ENCODE measurements at regions of chr6 and their contacts with region 1.

Region 1: DNA sequence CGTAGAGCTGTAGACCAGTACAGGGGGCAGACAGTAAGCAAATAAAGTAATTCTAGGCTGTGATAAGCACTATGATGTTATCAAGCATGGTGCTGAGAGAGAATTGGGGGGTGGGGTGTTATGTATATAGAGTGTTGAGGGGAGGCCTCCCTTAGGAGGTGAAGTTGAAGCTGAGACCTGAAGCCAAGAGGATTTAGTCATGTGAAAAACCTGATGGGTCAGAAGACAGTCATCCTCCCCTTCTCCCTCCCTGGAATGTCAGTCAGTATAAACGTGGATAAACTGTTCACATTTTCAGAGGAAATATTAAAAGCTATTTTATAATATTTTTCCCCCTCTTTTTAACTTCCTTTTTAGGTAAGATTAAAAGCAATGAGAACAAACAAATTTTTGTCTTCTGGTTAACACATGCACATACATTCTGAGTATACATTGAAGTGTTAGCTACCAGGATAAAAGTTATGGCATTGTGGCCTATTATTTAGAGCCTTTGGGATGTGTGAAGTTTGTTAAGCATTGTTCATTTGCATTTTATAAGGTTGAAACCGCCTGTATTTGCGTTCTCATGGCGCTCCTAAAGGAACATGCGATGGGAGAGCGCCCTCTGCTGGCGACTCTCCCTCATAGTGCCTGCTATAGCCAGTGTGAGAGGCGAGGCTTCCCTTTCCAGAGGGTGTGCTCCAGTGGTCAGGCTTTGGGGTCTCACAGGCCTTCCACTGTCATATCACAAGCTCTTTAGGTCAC is 35.4 kb upstream of the MAPK13 start:
- DNase-seq: peak; percentile 33
- ATAC-seq: peak; percentile 100
- H3K4me3 ChIP-seq: no peak overlapping the region
- H3K27ac ChIP-seq: peak overlapping the region; percentile 28; the same call in 1 of the 2 replicates
- H3K4me1 ChIP-seq: peaks cover 7% of the 10 kb centered on the region; the same call in 1 of the 2 replicates
- H3K27me3 ChIP-seq: no peaks in the 10 kb centered on the region
- CTCF ChIP-seq: peak; percentile 86 to 95 (median 93); a peak in 5 of 6 replicates
- EP300 ChIP-seq: no peak
- POLR2A ChIP-seq: no peak
- RAD21 ChIP-seq: peak; percentile 95

Region 2: GRCh38 chr6:35771343-35771627 is 323.6 kb before region 1 on chr6:
- CTCF ChIA-PET with region 1: no interaction called
- POLR2A ChIA-PET with region 1: no interaction called
- RAD21 ChIA-PET with region 1: no interaction called
- SMC1A ChIA-PET with region 1: no interaction called
- in situ Hi-C with region 1: no loop called
- intact Hi-C with region 1: no loop called
- DNase-seq: no peak
- ATAC-seq: peak; percentile 17; the same call in 2 of the 3 replicates
- H3K4me3 ChIP-seq: no peak overlapping the region
- H3K27ac ChIP-seq: no peak overlapping the region
- H3K4me1 ChIP-seq: peaks cover 11% of the 10 kb centered on the region
- H3K27me3 ChIP-seq: no peaks in the 10 kb centered on the region
- CTCF ChIP-seq: no peak
- EP300 ChIP-seq: no peak
- POLR2A ChIP-seq: no peak
- RAD21 ChIP-seq: no peak

Region 3: DNA sequence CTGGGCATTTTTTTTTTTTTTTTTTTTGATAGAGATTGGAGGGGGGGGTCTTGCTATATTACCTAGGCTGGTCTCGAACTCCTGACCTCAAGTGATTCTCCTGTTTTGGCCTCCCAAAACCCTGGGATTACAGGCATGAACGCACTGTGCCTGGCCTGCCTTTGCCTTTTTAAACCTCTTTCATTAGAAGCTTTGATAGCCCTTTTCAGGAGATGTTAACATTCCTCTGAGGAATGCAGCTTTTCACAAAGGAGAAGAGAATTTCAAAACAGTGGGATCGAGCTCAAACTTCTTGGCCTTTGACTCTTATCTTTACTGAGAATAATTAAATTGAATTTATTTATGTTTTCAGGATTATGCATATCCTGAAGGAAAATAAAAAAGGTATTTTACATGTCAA is 101.8 kb before region 1 on chr6:
- CTCF ChIA-PET with region 1: interaction called, 12 read pairs
- POLR2A ChIA-PET with region 1: no interaction called
- RAD21 ChIA-PET with region 1: no interaction called
- SMC1A ChIA-PET with region 1: interaction called, 3 read pairs
- in situ Hi-C with region 1: no loop called
- intact Hi-C with region 1: no loop called
- DNase-seq: no peak
- ATAC-seq: no peak
- H3K4me3 ChIP-seq: no peak overlapping the region
- H3K27ac ChIP-seq: no peak overlapping the region
- H3K4me1 ChIP-seq: no peaks in the 10 kb centered on the region
- H3K27me3 ChIP-seq: no peaks in the 10 kb centered on the region
- CTCF ChIP-seq: no peak
- EP300 ChIP-seq: no peak
- POLR2A ChIP-seq: no peak
- RAD21 ChIP-seq: no peak

Region 4: DNA sequence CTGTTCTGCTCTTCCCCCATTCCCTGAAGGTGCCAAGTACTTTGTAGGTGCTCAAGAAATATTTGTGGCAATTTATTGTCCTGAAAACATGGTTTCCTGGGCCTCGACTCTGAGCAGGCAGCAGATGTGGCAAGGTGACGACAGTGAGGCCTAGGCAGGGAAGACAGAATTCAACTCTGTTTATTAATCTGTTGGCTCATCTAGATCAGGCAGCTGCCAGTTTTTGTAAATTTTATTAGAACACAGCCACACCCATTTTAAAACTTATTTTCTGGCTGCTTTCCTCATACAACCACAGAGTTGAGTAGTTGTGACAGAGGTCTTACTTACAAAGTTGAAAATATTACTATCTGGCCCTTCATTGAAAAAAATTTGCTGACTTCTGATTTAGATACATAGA is 42.8 kb before region 1 on chr6:
- CTCF ChIA-PET with region 1: interaction called, 13 read pairs
- POLR2A ChIA-PET with region 1: no interaction called
- RAD21 ChIA-PET with region 1: interaction called, 4 read pairs
- SMC1A ChIA-PET with region 1: interaction called, 8 read pairs
- in situ Hi-C with region 1: no loop called
- intact Hi-C with region 1: no loop called
- DNase-seq: no peak
- ATAC-seq: no peak
- H3K4me3 ChIP-seq: no peak overlapping the region
- H3K27ac ChIP-seq: no peak overlapping the region
- H3K4me1 ChIP-seq: peaks cover 3% of the 10 kb centered on the region; the same call in 1 of the 2 replicates
- H3K27me3 ChIP-seq: no peaks in the 10 kb centered on the region
- CTCF ChIP-seq: no peak
- EP300 ChIP-seq: no peak
- POLR2A ChIP-seq: no peak
- RAD21 ChIP-seq: no peak

Region 5: DNA sequence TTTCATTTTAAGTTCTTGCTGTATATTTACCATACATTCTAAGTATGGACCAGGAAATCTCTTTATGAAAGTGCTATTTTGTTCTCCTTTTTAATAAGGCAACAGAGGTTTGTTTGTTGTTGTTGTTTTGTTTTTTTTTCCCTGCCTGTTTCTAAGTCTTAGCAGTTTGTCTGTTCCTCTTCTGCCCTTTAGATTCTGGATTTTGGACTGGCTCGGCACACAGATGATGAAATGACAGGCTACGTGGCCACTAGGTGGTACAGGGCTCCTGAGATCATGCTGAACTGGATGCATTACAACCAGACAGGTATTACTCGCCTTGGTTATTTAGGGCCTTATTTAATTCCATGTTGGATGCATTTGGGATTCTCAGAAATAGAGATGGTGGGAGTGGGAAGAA is 19.3 kb before region 1 on chr6:
- CTCF ChIA-PET with region 1: interaction called, 33 read pairs
- POLR2A ChIA-PET with region 1: interaction called, 3 read pairs
- RAD21 ChIA-PET with region 1: interaction called, 7 read pairs
- SMC1A ChIA-PET with region 1: interaction called, 18 read pairs
- in situ Hi-C with region 1: no loop called
- intact Hi-C with region 1: no loop called
- DNase-seq: no peak
- ATAC-seq: 0 out of 3 replicates have a peak, but pooled peaks have one; percentile 24
- H3K4me3 ChIP-seq: no peak overlapping the region
- H3K27ac ChIP-seq: no peak overlapping the region
- H3K4me1 ChIP-seq: no peaks in the 10 kb centered on the region
- H3K27me3 ChIP-seq: no peaks in the 10 kb centered on the region
- CTCF ChIP-seq: peak; percentile 8 to 30 (median 29); a peak in 2 of 6 replicates
- EP300 ChIP-seq: no peak
- POLR2A ChIP-seq: no peak
- RAD21 ChIP-seq: 0 out of 2 replicates have a peak, but pooled peaks have one; percentile 13

Region 6: GRCh38 chr6:36114798-36115408 is 20.0 kb after region 1 on chr6:
- CTCF ChIA-PET with region 1: interaction called, 38 read pairs
- POLR2A ChIA-PET with region 1: interaction called, 5 read pairs
- RAD21 ChIA-PET with region 1: interaction called, 4 read pairs
- SMC1A ChIA-PET with region 1: interaction called, 23 read pairs
- in situ Hi-C with region 1: no loop called
- intact Hi-C with region 1: no loop called
- DNase-seq: peak; percentile 60
- ATAC-seq: peak; percentile 76
- H3K4me3 ChIP-seq: peak overlapping the region; percentile 18; the same call in 1 of the 2 replicates
- H3K27ac ChIP-seq: peak overlapping the region; percentile 63
- H3K4me1 ChIP-seq: peaks cover 43% of the 10 kb centered on the region
- H3K27me3 ChIP-seq: no peaks in the 10 kb centered on the region
- CTCF ChIP-seq: no peak
- EP300 ChIP-seq: peak; percentile 62 to 77; a peak in 3 of 4 replicates
- POLR2A ChIP-seq: no peak
- RAD21 ChIP-seq: no peak

Region 7: GRCh38 chr6:36196880-36197548 is 102.1 kb after region 1 on chr6:
- CTCF ChIA-PET with region 1: interaction called, 16 read pairs
- POLR2A ChIA-PET with region 1: no interaction called
- RAD21 ChIA-PET with region 1: interaction called, 8 read pairs
- SMC1A ChIA-PET with region 1: interaction called, 13 read pairs
- in situ Hi-C with region 1: no loop called
- intact Hi-C with region 1: no loop called
- DNase-seq: peak; percentile 88
- ATAC-seq: peak; percentile 97
- H3K4me3 ChIP-seq: peak overlapping the region; percentile 79
- H3K27ac ChIP-seq: peak overlapping the region; percentile 64
- H3K4me1 ChIP-seq: peaks cover 5% of the 10 kb centered on the region; the same call in 1 of the 2 replicates
- H3K27me3 ChIP-seq: no peaks in the 10 kb centered on the region
- CTCF ChIP-seq: no peak
- EP300 ChIP-seq: no peak
- POLR2A ChIP-seq: peak; percentile 79
- RAD21 ChIP-seq: no peak

Region 8: GRCh38 chr6:36386495-36387439 is 291.8 kb after region 1 on chr6:
- CTCF ChIA-PET with region 1: no interaction called
- POLR2A ChIA-PET with region 1: no interaction called
- RAD21 ChIA-PET with region 1: no interaction called
- SMC1A ChIA-PET with region 1: no interaction called
- in situ Hi-C with region 1: no loop called
- intact Hi-C with region 1: no loop called
- DNase-seq: no peak
- ATAC-seq: peak; percentile 49
- H3K4me3 ChIP-seq: peak overlapping the region; percentile 68
- H3K27ac ChIP-seq: peak overlapping the region; percentile 6
- H3K4me1 ChIP-seq: peaks cover 40% of the 10 kb centered on the region
- H3K27me3 ChIP-seq: peaks cover 3 to 4% of the 10 kb centered on the region in 2 experiments; a peak in 2 of 4 replicates
- CTCF ChIP-seq: no peak
- EP300 ChIP-seq: no peak
- POLR2A ChIP-seq: no peak
- RAD21 ChIP-seq: no peak

Region 9: GRCh38 chr6:36839749-36840431 is 745.0 kb after region 1 on chr6:
- CTCF ChIA-PET with region 1: no interaction called
- POLR2A ChIA-PET with region 1: no interaction called
- RAD21 ChIA-PET with region 1: no interaction called
- SMC1A ChIA-PET with region 1: no interaction called
- in situ Hi-C with region 1: no loop called
- intact Hi-C with region 1: no loop called
- DNase-seq: no peak
- ATAC-seq: peak; percentile 69
- H3K4me3 ChIP-seq: no peak overlapping the region; the same call in 1 of the 2 replicates
- H3K27ac ChIP-seq: no peak overlapping the region
- H3K4me1 ChIP-seq: 0 out of 2 replicates have a peak, but pooled peaks cover 4% of the 10 kb centered on the region
- H3K27me3 ChIP-seq: peaks cover 4 to 17% of the 10 kb centered on the region in 2 experiments; a peak in 3 of 4 replicates
- CTCF ChIP-seq: 0 out of 6 replicates have a peak, but pooled peaks of 1 of the 3 experiments have one; percentile 13
- EP300 ChIP-seq: no peak
- POLR2A ChIP-seq: no peak
- RAD21 ChIP-seq: no peak

Measured in GM12878 (cell line).